ENCODE measurements at regions of chr7 and their contacts with region 1.

Region 1: DNA sequence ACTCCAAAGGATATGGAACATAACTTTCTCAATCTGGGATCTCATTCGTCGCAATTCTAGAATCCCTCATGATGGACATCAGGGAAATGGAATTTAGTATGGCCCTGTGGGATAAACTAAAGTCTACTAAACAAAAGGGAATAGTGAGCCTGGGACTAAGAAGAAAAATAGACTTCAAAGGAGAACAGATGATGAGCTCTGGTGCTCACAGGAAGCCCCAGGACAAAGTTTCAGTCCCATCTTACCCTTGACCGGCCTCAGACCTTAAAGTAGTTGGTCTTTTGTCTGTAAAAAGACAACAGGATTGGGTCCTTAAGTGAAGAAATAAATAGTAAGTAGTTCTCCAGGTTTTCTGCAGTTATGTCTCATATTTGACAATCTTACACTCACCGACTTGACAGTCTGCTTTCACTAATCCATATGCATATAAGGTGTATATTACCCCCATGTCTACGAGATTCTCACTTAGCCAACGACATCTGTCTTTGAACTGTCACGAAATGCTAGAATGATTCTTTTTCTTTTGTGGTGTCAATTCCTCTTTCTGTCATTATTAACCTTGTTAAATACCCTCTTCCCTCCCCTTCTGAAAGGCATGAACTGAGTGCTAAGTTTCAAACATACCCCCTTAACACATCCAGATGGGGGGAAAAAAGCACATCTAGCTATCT is 10.9 kb upstream of the IKZF1 start:
- DNase-seq: no peak
- CTCF ChIP-seq: no peak

Region 2: GRCh38 chr7:50229964-50230363 is 63.7 kb before region 1 on chr7:
- CTCF ChIA-PET with region 1: no interaction called
- POLR2A ChIA-PET with region 1: no interaction called
- DNase-seq: no peak
- CTCF ChIP-seq: peak; percentile 22

Region 3: GRCh38 chr7:50246551-50246950 is 47.1 kb before region 1 on chr7:
- CTCF ChIA-PET with region 1: no interaction called
- POLR2A ChIA-PET with region 1: no interaction called
- DNase-seq: no peak
- CTCF ChIP-seq: no peak

Region 4: DNA sequence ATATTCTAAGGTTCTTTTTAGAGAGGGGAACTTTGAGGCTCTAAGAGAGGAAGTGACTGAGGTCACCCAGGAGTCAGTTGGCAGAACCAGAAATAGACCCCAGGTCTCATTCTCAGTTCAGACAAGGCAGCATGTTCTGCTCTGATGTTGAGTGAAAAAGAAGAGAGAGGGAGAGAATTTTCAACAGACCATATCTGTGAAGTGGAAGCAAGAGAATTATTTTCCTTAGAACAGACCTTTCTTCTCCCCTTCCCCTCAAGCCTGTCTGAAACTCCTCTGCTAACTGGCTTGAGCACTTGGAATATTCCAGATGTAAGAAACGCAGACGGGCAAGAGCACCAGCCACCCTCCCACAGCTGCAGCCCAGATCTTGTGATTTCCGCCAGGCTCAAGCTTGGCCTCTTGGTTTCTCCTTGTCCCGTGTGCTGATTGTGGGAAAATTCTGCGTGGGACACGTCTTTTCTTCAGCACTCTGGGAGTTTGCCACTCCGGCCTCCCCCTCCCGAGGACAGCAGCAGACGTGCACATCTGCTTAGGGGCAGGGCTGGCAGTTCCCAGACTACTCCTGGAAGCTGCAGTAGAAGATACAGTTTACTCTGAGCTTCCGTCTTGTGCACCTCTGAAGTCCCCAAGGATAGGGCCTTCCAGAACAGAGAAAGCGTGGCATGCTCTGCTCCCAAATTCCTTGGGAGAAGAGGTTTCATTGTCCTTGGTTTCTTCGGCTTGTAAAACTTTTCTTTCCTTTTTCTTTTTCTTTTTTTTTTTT is 11.8 kb before region 1 on chr7:
- CTCF ChIA-PET with region 1: interaction called, 11 read pairs
- POLR2A ChIA-PET with region 1: no interaction called
- DNase-seq: peak; percentile 62
- CTCF ChIP-seq: no peak

Region 5: GRCh38 chr7:50393547-50394252 is 100.1 kb after region 1 on chr7:
- CTCF ChIA-PET with region 1: no interaction called
- POLR2A ChIA-PET with region 1: no interaction called
- DNase-seq: no peak
- CTCF ChIP-seq: no peak

Measured in GM10248 (cell line).